Heart left ventricle (tissue), 16 donors: ENCODE measurements at regions of chr1 and their contacts with region 1.

Region 1: GRCh38 chr1:201955009-201955728 is at the start of gene TIMM17A:
- DNase-seq: peak; percentile 96 to 98 (median 97)
- ATAC-seq: peak; percentile 100
- H3K4me3 ChIP-seq: peak within 1 kb of the TSS; percentile 64 to 95 (median 78)
- H3K27ac ChIP-seq: peak within 1 kb of the TSS; percentile 68 to 91 (median 81)
- H3K4me1 ChIP-seq: peaks cover 0 to 20% (median 11%) of the 10 kb centered on the region in 12 donors
- H3K27me3 ChIP-seq: no peaks in the 10 kb centered on the region
- CTCF ChIP-seq: peak in 1 of 12 donors; percentile 16
- POLR2A ChIP-seq: peak; percentile 59 to 82
- total RNA-seq, gene TIMM17A: 31.7 to 120 (median 86.0) TPM

Region 2: GRCh38 chr1:201870397-201870796 is 84.8 kb before region 1 on chr1:
- intact Hi-C with region 1: no loop called
- DNase-seq: no peak
- ATAC-seq: no peak
- H3K4me3 ChIP-seq: no peak overlapping the region
- H3K27ac ChIP-seq: no peak overlapping the region
- H3K4me1 ChIP-seq: peaks cover 0 to 4% (median 0%) of the 10 kb centered on the region in 12 donors
- H3K27me3 ChIP-seq: no peaks in the 10 kb centered on the region
- CTCF ChIP-seq: no peak
- POLR2A ChIP-seq: no peak

Region 3: DNA sequence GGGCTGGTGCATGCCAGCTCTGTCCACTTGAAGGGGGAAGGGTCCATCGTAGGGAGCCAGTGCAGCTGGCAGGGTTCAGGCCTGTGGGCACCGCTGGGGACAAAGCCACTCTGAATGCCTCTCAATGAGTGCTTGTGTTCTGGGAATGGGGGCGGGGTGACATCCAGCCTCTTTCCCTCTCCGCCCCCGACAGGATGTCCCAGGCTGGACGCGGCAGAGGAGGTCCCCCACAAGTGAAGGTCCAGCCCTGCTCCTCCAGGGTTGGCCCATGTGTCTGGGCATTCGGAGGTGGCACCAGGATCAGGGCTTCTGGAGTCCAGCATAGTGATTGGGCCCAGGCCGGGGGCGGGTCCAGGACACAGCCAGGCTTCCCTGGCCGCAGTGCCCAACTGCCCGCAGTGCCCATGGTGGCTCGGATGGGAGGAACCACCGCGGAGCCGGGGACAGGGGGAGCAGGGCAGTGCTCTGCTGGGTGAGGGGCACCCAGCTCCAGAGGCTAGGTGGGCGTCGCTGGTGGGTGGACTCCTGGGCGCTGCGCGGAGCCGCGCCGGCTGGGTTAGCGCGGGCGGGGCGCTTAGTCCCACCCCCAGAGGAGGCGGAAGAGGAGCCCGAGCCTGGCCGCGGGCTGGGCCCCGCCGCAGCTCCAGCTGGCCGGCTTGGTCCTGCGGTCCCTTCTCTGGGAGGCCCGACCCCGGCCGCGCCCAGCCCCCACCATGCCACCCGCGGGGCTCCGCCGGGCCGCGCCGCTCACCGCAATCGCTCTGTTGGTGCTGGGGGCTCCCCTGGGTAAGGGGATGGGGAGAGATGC is 66.7 kb before region 1 on chr1 and contains the start of gene SHISA4:
- intact Hi-C with region 1: loop called in 1 of 10 experiments (anchors 2 kb)
- DNase-seq: peak; percentile 80 to 94 (median 89)
- ATAC-seq: peak; percentile 74 to 88 (median 84)
- H3K4me3 ChIP-seq: peak within 1 kb of the TSS; percentile 62 to 93 (median 72)
- H3K27ac ChIP-seq: peak within 1 kb of the TSS; percentile 42 to 95 (median 78)
- H3K4me1 ChIP-seq: peaks cover 0 to 84% (median 35%) of the 10 kb centered on the region in 12 donors
- H3K27me3 ChIP-seq: peaks cover 0 to 14% (median 0%) of the 10 kb centered on the region in 9 donors
- CTCF ChIP-seq: no peak
- POLR2A ChIP-seq: peak; percentile 25 to 91
- total RNA-seq, gene SHISA4: 66.5 to 262 (median 133) TPM

Region 4: GRCh38 chr1:201982623-201983379 is 27.6 kb after region 1 on chr1 and contains the start of gene RNPEP:
- intact Hi-C with region 1: loop called in 1 of 10 experiments (anchors 2 kb)
- DNase-seq: peak; percentile 81 to 85 (median 83)
- ATAC-seq: peak; percentile 65 to 92 (median 88)
- H3K4me3 ChIP-seq: peak within 1 kb of the TSS; percentile 75 to 100 (median 96)
- H3K27ac ChIP-seq: peak within 1 kb of the TSS; percentile 43 to 98 (median 94)
- H3K4me1 ChIP-seq: peaks cover 0 to 39% (median 16%) of the 10 kb centered on the region in 12 donors
- H3K27me3 ChIP-seq: no peaks in the 10 kb centered on the region
- CTCF ChIP-seq: peak in 4 of 12 donors; percentile 4 to 18 (median 10)
- POLR2A ChIP-seq: peak; percentile 33 to 70
- total RNA-seq, gene RNPEP: 14.1 to 36.2 (median 18.1) TPM